ENCODE measurements at regions of chr4 and their contacts with region 1.

Region 1: DNA sequence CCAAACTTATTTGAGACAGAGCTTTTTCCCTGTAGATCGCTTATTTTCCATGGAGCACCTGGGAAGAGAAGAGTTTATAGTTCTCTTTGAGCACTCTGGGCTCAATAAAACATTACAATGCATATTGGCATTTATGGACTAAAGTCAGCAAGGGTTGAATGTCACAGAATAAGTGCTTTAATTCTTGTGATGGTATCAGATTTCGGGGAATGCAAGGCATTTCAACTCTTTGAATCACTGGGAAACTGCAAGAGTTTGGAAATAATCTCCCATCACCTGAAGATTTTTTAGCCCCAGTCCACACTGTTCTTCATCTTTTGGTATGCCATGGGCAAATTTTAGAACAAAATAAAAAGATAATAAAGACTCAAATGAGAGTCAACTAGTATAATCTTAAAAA is 111.5 kb upstream of the WDFY3 start:
- DNase-seq: no peak
- ATAC-seq: no peak

Region 2: DNA sequence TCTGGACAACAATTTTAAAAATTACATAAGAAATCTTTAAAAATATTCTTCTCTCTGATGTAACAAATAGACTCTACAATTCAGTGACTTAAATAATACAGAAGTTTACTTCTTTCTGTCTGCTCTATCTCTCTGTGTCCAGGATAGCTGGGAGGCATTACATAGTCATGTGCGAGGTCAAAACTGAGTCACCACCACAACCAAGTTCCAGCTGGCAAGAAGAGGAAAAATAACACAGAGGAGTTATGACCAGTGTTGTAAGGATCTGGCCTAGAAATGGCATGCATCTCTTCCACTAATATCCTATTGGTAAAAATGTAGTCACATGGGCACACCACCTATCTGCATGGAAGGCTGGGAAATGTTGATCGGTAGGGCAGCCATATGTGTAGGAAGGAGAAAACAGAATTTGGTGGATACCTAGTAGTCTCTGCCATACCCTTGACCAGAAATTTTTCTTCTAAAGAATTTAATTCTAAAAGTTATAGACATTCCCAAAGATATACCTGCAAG is 72.1 kb before region 1 on chr4:
- intact Hi-C with region 1: no loop called
- DNase-seq: no peak
- ATAC-seq: no peak

Region 3: DNA sequence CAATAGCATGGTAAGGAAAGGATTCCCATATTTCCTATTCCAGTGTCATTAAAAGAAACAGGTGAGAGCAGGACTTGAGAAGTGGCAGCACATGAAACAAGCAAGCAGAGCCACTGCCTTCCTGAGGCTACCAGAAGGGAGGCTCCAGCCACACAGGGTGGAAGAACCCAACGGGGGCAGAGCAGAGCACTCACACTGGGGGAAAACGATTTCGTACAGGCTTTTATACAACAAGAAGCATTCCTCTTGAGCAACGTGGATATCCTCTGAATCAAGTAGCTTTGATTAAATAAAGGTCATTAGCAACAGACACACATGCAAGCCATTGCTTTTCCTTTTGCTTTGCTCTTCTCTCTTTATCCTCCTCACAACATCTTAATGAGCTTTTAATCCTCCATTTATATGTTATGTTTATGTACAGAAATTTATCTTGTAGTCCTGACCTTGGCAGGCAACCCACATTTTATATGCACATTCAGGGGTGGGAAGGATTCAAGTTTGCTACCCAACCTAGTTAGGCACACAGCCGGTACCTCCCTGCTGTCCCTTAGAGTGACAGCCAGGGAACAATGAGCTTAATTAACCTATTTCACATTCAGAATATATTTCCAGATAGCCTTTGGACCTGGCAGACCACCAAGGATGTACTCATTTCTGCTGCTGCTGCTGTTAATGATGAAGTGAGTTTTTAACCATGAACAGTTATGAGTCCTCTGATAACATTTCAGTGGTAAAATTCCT is 599.0 kb after region 1 on chr4:
- intact Hi-C with region 1: loop called (anchors 5 kb)
- DNase-seq: no peak
- ATAC-seq: no peak

Region 4: GRCh38 chr4:86043755-86044592 is 966.0 kb after region 1 on chr4:
- intact Hi-C with region 1: loop called (anchors 10 kb)
- DNase-seq: no peak
- ATAC-seq: peak; percentile 71

Measured in sciatic nerve (tissue), 2 donors.